ENCODE measurements at regions of chr1 and their contacts with region 1.

Region 1: GRCh38 chr1:156456622-156457465 is 43.7 kb downstream of the MEF2D start:
- DNase-seq: peak; percentile 96 to 99
- H3K4me3 ChIP-seq: peak overlapping the region; percentile 62 to 70
- H3K27ac ChIP-seq: peak overlapping the region; percentile 98 to 99
- H3K4me1 ChIP-seq: peaks cover 5 to 17% of the 10 kb centered on the region in 2 donors
- H3K27me3 ChIP-seq: no peaks in the 10 kb centered on the region
- CTCF ChIP-seq: no peak

Region 2: DNA sequence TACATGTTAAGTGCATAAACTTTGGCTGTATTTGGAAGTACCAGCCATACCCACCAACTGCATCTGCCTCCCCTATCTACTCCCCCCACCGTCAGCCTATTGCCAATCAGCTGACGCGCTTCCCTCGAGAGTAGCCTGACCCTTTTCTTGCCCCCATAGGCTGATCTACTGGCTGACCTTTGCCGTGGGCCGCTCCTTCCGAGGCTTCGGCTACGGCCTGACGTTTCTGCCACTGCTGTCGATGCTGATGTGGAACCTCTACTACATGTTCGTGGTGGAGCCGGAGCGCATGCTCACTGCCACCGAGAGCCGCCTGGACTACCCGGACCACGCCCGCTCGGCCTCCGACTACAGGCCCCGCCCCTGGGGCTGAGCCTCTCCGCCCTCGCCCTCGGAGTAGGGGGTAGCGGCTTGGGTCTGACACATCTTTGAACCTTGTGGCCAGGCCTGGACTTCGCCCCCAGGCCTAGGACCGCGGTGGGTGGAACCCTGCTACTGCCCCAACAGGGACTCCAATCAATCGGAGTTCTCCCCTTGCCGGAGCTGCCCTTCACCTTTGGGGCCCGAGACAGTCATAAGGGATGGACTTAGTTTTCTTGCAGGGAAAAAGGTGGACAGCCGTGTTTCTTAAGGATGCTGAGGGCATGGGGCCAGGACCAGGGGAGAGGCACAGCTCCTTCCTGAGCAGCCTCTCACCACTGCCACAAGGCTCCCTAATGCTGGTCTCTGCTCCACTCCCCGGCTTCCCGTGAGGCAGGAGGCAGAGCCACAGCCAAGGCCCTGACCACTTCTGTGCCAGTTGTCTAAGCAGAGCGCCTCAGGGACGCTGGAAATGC is 165.4 kb before region 1 on chr1:
- intact Hi-C with region 1: no loop called
- DNase-seq: peak; percentile 79 to 94
- H3K4me3 ChIP-seq: peak overlapping the region; percentile 54 to 65
- H3K27ac ChIP-seq: peak overlapping the region; percentile 87 to 90
- H3K4me1 ChIP-seq: peaks cover 7 to 11% of the 10 kb centered on the region in 2 donors
- H3K27me3 ChIP-seq: no peaks in the 10 kb centered on the region
- CTCF ChIP-seq: no peak

Region 3: GRCh38 chr1:156471496-156472490 is 14.9 kb after region 1 on chr1:
- intact Hi-C with region 1: loop called (anchors 1 kb)
- DNase-seq: peak in 1 of 2 donors; percentile 93
- H3K4me3 ChIP-seq: no peak overlapping the region
- H3K27ac ChIP-seq: peak overlapping the region; percentile 74 to 87
- H3K4me1 ChIP-seq: peaks cover 20 to 47% of the 10 kb centered on the region in 2 donors
- H3K27me3 ChIP-seq: no peaks in the 10 kb centered on the region
- CTCF ChIP-seq: no peak

Region 4: GRCh38 chr1:156500797-156501499 is 44.1 kb after region 1 on chr1:
- intact Hi-C with region 1: loop called (anchors 1 kb)
- DNase-seq: peak; percentile 82 to 96
- H3K4me3 ChIP-seq: peak overlapping the region; percentile 86 to 100
- H3K27ac ChIP-seq: peak overlapping the region; percentile 99 to 100
- H3K4me1 ChIP-seq: peaks cover 34 to 61% of the 10 kb centered on the region in 2 donors
- H3K27me3 ChIP-seq: no peaks in the 10 kb centered on the region
- CTCF ChIP-seq: peak in 2 of 3 experiments; percentile 39 to 55

Region 5: GRCh38 chr1:156601122-156601830 is 144.4 kb after region 1 on chr1 and contains the start of gene GPATCH4:
- intact Hi-C with region 1: loop called (anchors 2 kb)
- DNase-seq: peak; percentile 36 to 91
- H3K4me3 ChIP-seq: peak within 1 kb of the TSS; percentile 66 to 83
- H3K27ac ChIP-seq: peak within 1 kb of the TSS; percentile 77 to 83
- H3K4me1 ChIP-seq: peaks cover 6 to 13% of the 10 kb centered on the region in 2 donors
- H3K27me3 ChIP-seq: no peaks in the 10 kb centered on the region
- CTCF ChIP-seq: peak in 1 of 3 experiments; percentile 12
- total RNA-seq, gene GPATCH4: 29.4 TPM

Region 6: GRCh38 chr1:156659994-156660751 is 203.3 kb after region 1 on chr1:
- intact Hi-C with region 1: loop called (anchors 5 kb)
- DNase-seq: peak; percentile 86 to 99
- H3K4me3 ChIP-seq: peak overlapping the region in 1 of 2 donors; percentile 27
- H3K27ac ChIP-seq: peak overlapping the region; percentile 88 to 90
- H3K4me1 ChIP-seq: peaks cover 50 to 66% of the 10 kb centered on the region in 2 donors
- H3K27me3 ChIP-seq: no peaks in the 10 kb centered on the region
- CTCF ChIP-seq: peak; percentile 99 to 100 (median 99)

Measured in ascending aorta (tissue), 2 donors.